GM12878 (cell line): ENCODE measurements at regions of chr10 and their contacts with region 1.

Region 1: DNA sequence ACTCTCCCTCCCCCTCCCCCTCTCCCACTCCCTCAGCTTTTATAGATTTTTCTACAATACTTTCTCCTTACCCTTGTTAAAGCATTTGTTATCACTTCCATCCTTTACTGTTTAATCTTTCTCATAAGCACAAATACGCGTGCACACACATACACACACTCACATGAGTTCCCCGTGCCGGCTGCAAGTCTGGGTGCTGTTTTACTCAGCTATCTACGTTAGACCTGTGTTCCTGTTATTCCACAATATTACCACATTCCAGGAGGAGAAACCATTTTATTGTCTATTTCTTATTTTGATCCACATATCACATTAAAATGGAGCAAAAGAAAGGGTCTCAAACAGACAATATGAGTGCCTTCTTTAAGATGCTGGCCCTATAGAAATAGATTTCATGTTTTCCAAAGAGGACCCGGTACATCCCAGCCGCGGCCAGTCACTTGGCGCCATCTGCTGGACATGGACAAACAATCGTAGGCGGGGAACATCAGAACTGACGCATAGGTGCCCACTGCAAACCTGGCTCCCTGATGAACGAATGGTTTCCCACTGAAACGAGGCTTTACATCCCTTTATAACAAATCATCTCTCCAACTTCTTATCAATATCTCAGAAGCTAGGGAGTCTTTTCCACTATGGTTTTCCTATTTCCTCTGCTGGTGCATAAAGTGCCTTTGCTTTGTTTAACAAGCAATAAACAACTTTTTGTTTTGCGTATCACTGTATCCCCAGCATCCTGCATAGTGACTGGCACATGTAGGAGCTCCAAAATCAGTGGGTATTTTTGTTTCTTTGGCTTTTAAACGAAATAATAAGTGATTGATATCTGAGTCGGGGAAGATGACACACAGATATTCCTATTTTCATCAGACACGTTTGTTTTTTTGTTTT is 25.2 kb upstream of the OPTN start:
- DNase-seq: no peak
- ATAC-seq: peak; percentile 97
- H3K4me3 ChIP-seq: no peak overlapping the region
- H3K27ac ChIP-seq: no peak overlapping the region
- H3K4me1 ChIP-seq: no peaks in the 10 kb centered on the region
- H3K27me3 ChIP-seq: peaks cover 0 to 3% of the 10 kb centered on the region in 2 experiments; a peak in 2 of 4 replicates
- CTCF ChIP-seq: peak; percentile 69 to 81 (median 74)
- EP300 ChIP-seq: no peak
- POLR2A ChIP-seq: no peak
- RAD21 ChIP-seq: peak; percentile 89

Region 2: GRCh38 chr10:12782537-12782936 is 292.3 kb before region 1 on chr10:
- CTCF ChIA-PET with region 1: interaction called, 10 read pairs
- POLR2A ChIA-PET with region 1: no interaction called
- RAD21 ChIA-PET with region 1: no interaction called
- SMC1A ChIA-PET with region 1: interaction called, 4 read pairs
- in situ Hi-C with region 1: no loop called
- intact Hi-C with region 1: loop called (anchors 2 kb)
- DNase-seq: no peak
- ATAC-seq: peak; percentile 61
- H3K4me3 ChIP-seq: no peak overlapping the region
- H3K27ac ChIP-seq: no peak overlapping the region
- H3K4me1 ChIP-seq: no peaks in the 10 kb centered on the region
- H3K27me3 ChIP-seq: no peaks in the 10 kb centered on the region
- CTCF ChIP-seq: peak; percentile 43 to 76 (median 66)
- EP300 ChIP-seq: no peak
- POLR2A ChIP-seq: no peak
- RAD21 ChIP-seq: peak; percentile 39; the same call in 1 of the 2 replicates

Region 3: GRCh38 chr10:13006037-13006436 is 68.8 kb before region 1 on chr10:
- CTCF ChIA-PET with region 1: no interaction called
- POLR2A ChIA-PET with region 1: no interaction called
- RAD21 ChIA-PET with region 1: no interaction called
- SMC1A ChIA-PET with region 1: no interaction called
- in situ Hi-C with region 1: no loop called
- intact Hi-C with region 1: no loop called
- DNase-seq: no peak
- ATAC-seq: no peak
- H3K4me3 ChIP-seq: no peak overlapping the region
- H3K27ac ChIP-seq: no peak overlapping the region
- H3K4me1 ChIP-seq: no peaks in the 10 kb centered on the region
- H3K27me3 ChIP-seq: peaks cover 2 to 6% of the 10 kb centered on the region in 2 experiments; a peak in 3 of 4 replicates
- CTCF ChIP-seq: no peak
- EP300 ChIP-seq: no peak
- POLR2A ChIP-seq: no peak
- RAD21 ChIP-seq: no peak

Region 4: GRCh38 chr10:13062803-13063202 is 12.0 kb before region 1 on chr10:
- CTCF ChIA-PET with region 1: interaction called, 19 read pairs
- POLR2A ChIA-PET with region 1: no interaction called
- RAD21 ChIA-PET with region 1: no interaction called
- SMC1A ChIA-PET with region 1: no interaction called
- in situ Hi-C with region 1: no loop called
- intact Hi-C with region 1: no loop called
- DNase-seq: no peak
- ATAC-seq: no peak
- H3K4me3 ChIP-seq: no peak overlapping the region
- H3K27ac ChIP-seq: no peak overlapping the region
- H3K4me1 ChIP-seq: no peaks in the 10 kb centered on the region
- H3K27me3 ChIP-seq: peaks cover 0 to 1% of the 10 kb centered on the region in 2 experiments; a peak in 3 of 4 replicates
- CTCF ChIP-seq: no peak
- EP300 ChIP-seq: no peak
- POLR2A ChIP-seq: no peak
- RAD21 ChIP-seq: no peak

Region 5: DNA sequence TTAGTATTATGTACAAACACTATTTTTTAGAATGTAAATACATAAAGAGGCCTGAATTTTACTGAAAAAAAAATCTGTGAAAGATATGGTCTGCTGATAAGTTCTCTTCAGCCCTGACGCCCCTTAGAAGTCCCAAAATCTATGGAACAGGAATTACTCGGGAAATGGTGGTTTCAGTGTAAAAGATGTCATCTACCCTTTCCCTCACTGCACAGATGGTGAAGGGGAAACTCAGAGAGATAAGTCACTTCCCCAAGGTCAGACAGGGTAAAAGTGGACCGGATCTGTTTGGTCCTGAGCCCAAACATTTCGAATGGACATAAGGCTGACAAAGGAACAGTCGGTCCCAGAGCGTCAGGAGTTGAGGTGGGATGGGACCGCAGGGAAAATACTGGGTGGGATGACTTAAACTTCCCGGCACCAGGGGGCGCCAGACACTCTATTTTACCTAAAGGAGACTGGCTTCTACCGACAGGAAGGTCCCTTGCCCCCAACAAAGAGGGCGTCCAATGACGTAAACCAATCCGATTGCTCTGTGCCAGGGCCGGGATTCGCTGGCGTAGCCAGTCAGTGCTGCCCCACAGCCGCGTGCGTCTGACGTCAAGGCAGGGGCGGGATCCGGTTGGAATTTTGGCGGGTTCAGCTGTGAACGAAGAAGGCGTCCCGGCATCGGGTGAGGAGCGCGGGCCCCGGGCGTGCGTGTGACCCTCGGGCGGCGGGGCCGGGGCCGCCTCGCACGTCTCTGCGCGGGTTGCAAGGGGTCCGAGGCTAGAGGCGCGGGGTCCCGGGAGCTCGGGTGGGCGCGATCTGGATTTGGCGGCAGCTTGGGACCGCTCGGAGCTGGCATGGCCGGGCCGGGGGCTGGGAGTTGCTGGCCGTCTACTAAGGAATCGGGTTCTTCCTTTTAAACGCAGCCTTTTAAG is 86.4 kb after region 1 on chr10 and contains the start of gene MCM10:
- CTCF ChIA-PET with region 1: no interaction called
- POLR2A ChIA-PET with region 1: no interaction called
- RAD21 ChIA-PET with region 1: no interaction called
- SMC1A ChIA-PET with region 1: no interaction called
- in situ Hi-C with region 1: no loop called
- intact Hi-C with region 1: no loop called
- DNase-seq: peak; percentile 96
- ATAC-seq: peak; percentile 99
- H3K4me3 ChIP-seq: peak within 1 kb of the TSS; percentile 81
- H3K27ac ChIP-seq: peak within 1 kb of the TSS; percentile 41
- H3K4me1 ChIP-seq: peaks cover 7% of the 10 kb centered on the region
- H3K27me3 ChIP-seq: no peaks in the 10 kb centered on the region
- CTCF ChIP-seq: peak; percentile 73 to 93 (median 79)
- EP300 ChIP-seq: no peak
- POLR2A ChIP-seq: peak; percentile 73
- RAD21 ChIP-seq: peak; percentile 67
- polyA plus RNA-seq, gene MCM10: 5.8 to 6.8 TPM

Region 6: DNA sequence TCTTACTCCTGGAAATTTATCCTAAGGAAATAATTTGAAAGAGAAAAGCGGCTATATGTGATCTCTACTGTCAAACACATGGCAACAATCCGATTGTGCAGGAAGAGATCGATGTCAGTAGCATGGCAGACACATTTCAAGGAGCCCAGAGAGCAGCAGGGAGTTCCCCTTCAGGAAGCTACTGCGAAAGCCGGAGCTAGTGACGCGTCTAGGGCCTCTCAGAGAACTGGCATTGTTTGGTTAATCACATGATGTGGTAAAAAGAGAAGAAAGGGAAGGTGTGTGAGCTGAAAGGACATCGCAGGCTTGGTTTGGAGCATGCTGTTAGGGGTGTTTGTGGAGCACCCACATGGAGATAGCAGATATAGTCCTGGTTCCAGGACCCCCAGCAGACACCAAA is 379.1 kb after region 1 on chr10:
- CTCF ChIA-PET with region 1: no interaction called
- POLR2A ChIA-PET with region 1: no interaction called
- RAD21 ChIA-PET with region 1: no interaction called
- SMC1A ChIA-PET with region 1: no interaction called
- in situ Hi-C with region 1: no loop called
- intact Hi-C with region 1: no loop called
- DNase-seq: peak; percentile 16
- ATAC-seq: peak; percentile 81
- H3K4me3 ChIP-seq: no peak overlapping the region
- H3K27ac ChIP-seq: no peak overlapping the region
- H3K4me1 ChIP-seq: no peaks in the 10 kb centered on the region
- H3K27me3 ChIP-seq: peaks cover 0 to 2% of the 10 kb centered on the region in 2 experiments; a peak in 3 of 4 replicates
- CTCF ChIP-seq: no peak
- EP300 ChIP-seq: no peak
- POLR2A ChIP-seq: no peak
- RAD21 ChIP-seq: no peak

Region 7: DNA sequence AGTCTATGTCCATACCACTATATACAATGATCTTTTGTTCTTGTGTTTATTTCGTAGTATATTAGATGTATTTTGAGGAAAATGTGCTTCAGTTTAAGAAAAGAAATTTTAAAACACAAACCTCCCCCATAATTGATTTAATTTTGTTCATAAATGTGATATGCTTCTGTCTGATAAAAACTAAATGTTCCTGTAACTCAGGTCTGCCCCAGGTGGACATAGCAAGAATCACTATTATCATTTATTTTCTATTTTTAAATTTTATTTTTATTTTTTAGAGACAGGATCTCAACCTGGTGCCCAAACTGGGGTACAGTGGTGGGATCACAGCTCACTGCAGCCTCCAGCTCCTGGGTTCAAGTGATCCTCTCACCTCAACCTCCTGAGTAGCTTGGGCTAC is 410.8 kb after region 1 on chr10:
- CTCF ChIA-PET with region 1: no interaction called
- POLR2A ChIA-PET with region 1: no interaction called
- RAD21 ChIA-PET with region 1: no interaction called
- SMC1A ChIA-PET with region 1: no interaction called
- in situ Hi-C with region 1: no loop called
- intact Hi-C with region 1: no loop called
- DNase-seq: no peak
- ATAC-seq: no peak
- H3K4me3 ChIP-seq: no peak overlapping the region
- H3K27ac ChIP-seq: no peak overlapping the region
- H3K4me1 ChIP-seq: peaks cover 9% of the 10 kb centered on the region
- H3K27me3 ChIP-seq: no peaks in the 10 kb centered on the region; a peak in 1 of 4 replicates
- CTCF ChIP-seq: peak in 1 of 3 experiments; percentile 19; a peak in 1 of 6 replicates
- EP300 ChIP-seq: no peak
- POLR2A ChIP-seq: no peak
- RAD21 ChIP-seq: no peak